HCT116 (cell line): ENCODE measurements at regions of chr21 and their contacts with region 1.

Region 1: DNA sequence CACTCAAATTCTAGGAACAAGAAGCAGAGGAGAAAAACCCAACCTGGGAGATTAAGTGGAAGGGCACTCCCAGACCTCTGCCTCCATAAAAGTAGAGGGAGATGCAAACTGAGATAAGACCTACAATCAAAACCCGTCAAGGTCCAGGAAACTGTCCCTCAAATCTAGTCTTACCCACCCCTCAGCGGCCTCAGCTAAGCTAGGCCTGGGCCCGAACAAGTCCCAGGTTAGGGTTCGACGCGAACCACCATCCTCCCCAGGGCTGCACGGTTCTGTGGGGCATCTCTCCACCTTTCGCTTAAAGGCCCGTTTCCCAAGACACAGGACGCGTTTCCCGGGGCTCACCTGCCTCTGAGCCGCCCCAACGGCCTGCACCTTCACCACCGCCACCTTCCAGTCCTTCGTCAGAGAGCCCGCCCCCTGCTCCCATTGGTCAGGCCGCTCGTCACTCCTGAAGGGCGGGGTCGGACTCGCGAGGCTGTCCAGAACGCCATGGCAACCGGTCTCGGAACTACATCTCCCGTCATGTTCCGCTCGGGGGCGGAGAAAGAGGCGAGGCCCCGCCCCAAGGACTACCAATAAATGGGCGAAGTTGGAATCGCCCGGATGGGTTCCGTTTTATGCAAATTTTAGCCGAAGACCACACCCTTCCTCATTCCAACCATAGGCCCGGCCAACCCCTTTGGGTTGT is at the start of gene CRYZL1:
- DNase-seq: peak; percentile 99
- ATAC-seq: peak; percentile 80
- H3K4me3 ChIP-seq: peak within 1 kb of the TSS; percentile 85 to 90
- H3K27ac ChIP-seq: peak within 1 kb of the TSS; percentile 69
- H3K4me1 ChIP-seq: peaks cover 12 to 13% of the 10 kb centered on the region in 2 experiments; a peak in 3 of 4 replicates
- H3K27me3 ChIP-seq: no peaks in the 10 kb centered on the region
- CTCF ChIP-seq: no peak
- POLR2A ChIP-seq: peak; percentile 62
- RAD21 ChIP-seq: no peak
- total RNA-seq, gene CRYZL1: 43.0 TPM

Region 2: DNA sequence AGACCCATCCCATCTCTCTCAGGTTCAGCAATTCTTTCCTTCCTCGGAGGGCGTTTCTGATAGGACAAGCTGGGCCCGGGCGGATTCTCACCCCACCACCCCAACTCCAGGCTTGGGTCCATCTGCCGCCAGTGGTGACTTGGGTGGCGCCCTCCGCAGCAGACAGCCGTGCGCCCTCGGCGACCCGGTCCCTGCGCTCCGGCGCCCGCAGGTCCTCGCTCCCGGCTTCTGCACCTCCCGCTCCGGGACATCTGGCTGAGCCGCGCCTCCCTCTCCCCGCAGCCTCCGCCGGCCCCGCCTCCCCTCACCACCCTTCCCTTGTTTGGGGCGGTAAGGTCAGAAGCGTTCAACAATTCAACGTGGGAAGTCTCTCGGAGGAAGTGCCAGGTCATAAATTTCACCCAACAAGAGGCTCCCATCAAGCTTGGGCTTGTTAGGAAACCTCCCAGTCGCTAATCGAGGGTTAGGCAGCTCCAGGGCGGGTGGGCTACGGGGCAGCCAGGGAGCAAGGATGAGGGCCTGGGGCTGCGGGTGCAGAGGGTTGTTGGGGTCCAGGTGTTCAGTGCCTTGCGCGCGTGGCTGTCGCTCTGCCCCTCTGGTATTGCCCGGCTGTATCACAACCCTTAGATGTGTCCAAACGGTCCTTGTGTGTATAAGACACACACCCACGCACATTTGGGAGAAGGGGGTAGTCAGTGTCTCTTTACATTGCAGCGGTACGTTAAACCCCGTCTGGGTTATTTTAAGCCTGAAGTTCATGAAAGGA is 531.7 kb before region 1 on chr21:
- CTCF ChIA-PET with region 1: no interaction called
- POLR2A ChIA-PET with region 1: no interaction called
- RAD21 ChIA-PET with region 1: no interaction called
- intact Hi-C with region 1: no loop called
- DNase-seq: no peak
- ATAC-seq: no peak
- H3K4me3 ChIP-seq: no peak overlapping the region
- H3K27ac ChIP-seq: no peak overlapping the region
- H3K4me1 ChIP-seq: no peaks in the 10 kb centered on the region
- H3K27me3 ChIP-seq: peaks cover 36% of the 10 kb centered on the region
- CTCF ChIP-seq: no peak
- POLR2A ChIP-seq: no peak
- RAD21 ChIP-seq: no peak

Region 3: DNA sequence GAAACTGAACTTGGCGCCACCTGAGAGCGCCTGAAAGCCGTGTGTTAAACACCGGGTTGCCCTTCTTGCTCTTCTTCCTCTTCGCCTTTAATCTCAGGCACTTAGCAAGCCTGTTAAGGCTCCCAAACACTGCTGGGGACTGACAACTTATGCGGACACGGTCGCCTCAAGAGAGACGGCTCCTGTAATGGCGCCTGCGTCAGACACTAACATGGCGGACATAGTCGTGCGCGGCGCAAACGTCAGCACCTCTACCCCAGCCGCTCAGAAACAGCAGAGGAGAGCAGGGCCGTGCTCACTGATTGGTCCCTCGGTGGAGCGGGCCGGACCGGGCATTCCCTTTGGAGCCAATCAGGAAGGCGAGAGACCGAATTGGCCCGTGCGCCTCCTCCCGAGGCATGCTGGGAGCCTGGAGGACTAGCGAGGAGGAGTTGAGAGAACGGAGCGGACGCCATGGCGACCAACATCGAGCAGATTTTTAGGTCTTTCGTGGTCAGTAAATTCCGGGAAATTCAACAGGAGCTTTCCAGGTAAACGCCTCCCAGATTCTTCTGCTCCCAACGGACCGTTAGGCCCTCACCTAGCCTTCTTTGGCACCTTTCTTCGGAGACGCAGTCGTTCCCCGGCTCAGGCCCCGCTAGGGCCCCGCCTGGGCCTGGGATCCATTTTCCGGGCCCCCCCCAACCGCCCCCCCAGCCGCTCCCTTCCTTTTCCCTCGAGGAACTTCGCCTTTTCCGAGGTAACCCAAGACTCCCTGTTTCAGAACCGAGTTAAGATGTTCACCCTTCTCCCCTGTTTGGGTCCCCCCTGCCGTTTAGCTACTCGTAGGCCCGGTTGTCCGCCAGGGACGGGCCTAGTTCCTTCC is 98.6 kb before region 1 on chr21 and contains the start of gene SON:
- CTCF ChIA-PET with region 1: no interaction called
- POLR2A ChIA-PET with region 1: no interaction called
- RAD21 ChIA-PET with region 1: no interaction called
- intact Hi-C with region 1: loop called (anchors 5 kb)
- DNase-seq: peak; percentile 96
- ATAC-seq: peak; percentile 94
- H3K4me3 ChIP-seq: peak within 1 kb of the TSS; percentile 87 to 91
- H3K27ac ChIP-seq: peak within 1 kb of the TSS; percentile 98
- H3K4me1 ChIP-seq: peaks cover 15 to 19% of the 10 kb centered on the region in 2 experiments
- H3K27me3 ChIP-seq: no peaks in the 10 kb centered on the region
- CTCF ChIP-seq: no peak
- POLR2A ChIP-seq: peak; percentile 82
- RAD21 ChIP-seq: no peak
- total RNA-seq, gene SON: 195 TPM

Region 4: DNA sequence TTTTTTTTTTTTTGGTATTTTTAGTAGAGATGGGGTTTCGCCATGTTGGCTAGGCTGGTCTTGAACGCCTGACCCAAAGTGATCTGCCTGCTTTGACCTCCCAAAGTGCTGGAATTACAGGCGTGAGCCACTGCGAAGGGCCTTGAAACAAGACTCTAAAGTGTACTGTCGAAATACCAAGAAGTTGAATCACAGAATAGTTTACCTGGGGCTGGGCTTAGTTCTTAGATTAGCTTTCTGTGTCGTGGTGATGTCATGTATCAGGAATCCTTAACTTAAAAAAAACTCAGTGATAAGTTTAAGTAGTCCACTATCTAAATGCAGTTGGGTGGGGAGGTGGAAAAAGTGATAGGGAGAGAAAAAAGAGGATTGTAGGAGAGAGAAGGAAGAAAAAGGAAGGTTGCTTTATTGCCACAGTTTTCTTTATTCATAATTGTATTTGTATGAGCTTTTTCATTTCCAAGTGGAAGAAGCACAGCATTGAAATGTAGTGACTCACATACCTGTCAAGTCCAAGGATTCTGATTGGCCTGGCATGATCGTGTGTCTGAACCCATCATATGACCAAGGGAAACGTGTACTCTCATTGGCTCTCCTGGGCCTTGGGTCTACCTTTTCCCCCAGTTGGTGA is 14.2 kb after region 1 on chr21:
- CTCF ChIA-PET with region 1: interaction called, 3 read pairs
- POLR2A ChIA-PET with region 1: interaction called, 4 read pairs
- RAD21 ChIA-PET with region 1: no interaction called
- intact Hi-C with region 1: loop called (anchors 1 kb)
- DNase-seq: peak; percentile 96
- ATAC-seq: peak; percentile 97
- H3K4me3 ChIP-seq: peak overlapping the region in 1 of 2 experiments; percentile 39; a peak in 2 of 4 replicates
- H3K27ac ChIP-seq: peak overlapping the region; percentile 89
- H3K4me1 ChIP-seq: peaks cover 35 to 45% of the 10 kb centered on the region in 2 experiments
- H3K27me3 ChIP-seq: no peaks in the 10 kb centered on the region
- CTCF ChIP-seq: no peak
- POLR2A ChIP-seq: no peak
- RAD21 ChIP-seq: no peak

Region 5: DNA sequence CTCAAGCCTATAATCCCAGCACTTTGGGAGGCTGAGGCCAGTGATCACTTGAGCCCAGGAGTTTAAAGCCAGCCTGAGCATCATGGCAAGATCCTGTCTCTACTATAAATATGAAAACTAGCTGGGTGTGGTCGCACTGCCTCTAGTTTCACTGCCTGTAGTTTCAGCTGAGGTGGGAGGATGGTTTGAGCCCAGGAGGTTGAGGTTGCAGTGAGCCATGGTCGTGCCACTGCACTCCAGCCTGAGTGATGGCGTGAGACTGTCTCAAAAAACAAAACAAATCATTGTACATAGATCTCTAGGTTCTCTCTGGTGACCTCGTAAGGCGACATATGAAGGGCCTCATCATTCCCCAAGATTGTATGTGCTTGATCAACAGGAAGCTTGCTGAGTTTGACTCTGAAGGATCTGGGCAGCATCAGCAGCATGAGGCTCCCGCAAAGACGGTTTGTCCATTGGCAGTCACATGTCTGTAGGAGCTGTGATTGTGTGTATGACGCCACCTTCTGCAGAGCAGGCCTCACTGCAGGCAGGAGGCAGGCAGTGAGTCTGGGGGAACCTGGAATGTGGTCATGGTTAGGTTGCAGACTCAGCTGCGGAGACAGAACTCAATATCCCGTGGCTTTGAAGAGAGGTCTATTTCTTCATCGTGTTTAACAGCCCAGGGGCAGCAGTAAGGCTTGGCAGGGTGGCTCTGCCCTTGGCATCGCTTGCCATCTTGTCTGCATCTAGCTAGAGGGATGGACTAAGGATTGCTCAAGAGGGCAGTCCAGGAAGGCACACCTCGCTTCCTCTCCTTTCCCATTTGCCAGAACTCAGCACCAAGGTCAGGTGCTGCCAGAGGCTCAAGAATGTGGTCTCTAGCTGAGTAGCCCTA is 260.2 kb after region 1 on chr21:
- CTCF ChIA-PET with region 1: no interaction called
- POLR2A ChIA-PET with region 1: no interaction called
- RAD21 ChIA-PET with region 1: no interaction called
- intact Hi-C with region 1: loop called (anchors 10 kb)
- DNase-seq: peak; percentile 38
- ATAC-seq: peak; percentile 96
- H3K4me3 ChIP-seq: no peak overlapping the region
- H3K27ac ChIP-seq: no peak overlapping the region
- H3K4me1 ChIP-seq: no peaks in the 10 kb centered on the region
- H3K27me3 ChIP-seq: no peaks in the 10 kb centered on the region
- CTCF ChIP-seq: peak; percentile 21 to 81 (median 75); a peak in 5 of 6 replicates
- POLR2A ChIP-seq: no peak
- RAD21 ChIP-seq: peak; percentile 75